ENCODE measurements at regions of chr3 and their contacts with region 1.

Region 1: DNA sequence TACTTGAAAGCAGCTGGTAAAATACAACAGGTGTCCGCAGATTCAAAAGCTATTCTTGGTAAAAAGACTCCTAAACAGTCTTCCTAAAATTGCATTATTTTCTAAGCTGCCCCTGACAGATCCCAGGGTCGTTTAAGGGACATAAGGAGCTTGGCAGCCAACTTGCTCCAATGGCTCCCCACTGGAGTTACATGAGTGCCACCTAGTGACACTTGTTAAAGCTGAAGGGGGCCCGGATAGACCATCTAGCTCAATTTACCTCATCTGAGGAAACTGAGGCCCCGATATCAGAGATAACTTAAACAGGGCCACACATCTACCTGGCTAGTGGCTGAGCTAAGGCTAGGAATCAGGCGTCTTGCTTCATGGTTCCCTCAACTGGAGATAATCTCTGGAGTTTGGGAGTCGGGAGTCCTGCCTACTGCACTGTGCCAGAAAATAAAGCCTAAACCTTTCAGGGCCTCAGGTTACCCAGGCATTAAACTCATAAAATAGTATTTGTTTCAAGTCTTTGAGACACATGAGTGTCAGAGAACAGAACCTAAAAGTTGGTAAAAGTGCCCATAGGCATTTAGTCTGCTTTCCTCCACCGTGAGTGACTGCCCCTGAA is 6.5 kb upstream of the TBC1D23 start:
- DNase-seq: peak in 4 of 9 experiments; percentile 15 to 64 (median 36)
- ATAC-seq: peak; percentile 66
- H3K4me3 ChIP-seq: no peak overlapping the region
- H3K4me3 Mint-ChIP-seq: no peak overlapping the region
- H3K27ac ChIP-seq: no peak overlapping the region
- H3K27ac Mint-ChIP-seq: no peak overlapping the region
- H3K4me1 ChIP-seq: no peaks in the 10 kb centered on the region
- H3K4me1 Mint-ChIP-seq: peaks cover 5% of the 10 kb centered on the region
- H3K27me3 ChIP-seq: no peaks in the 10 kb centered on the region
- H3K27me3 Mint-ChIP-seq: no peaks in the 10 kb centered on the region
- CTCF ChIP-seq: peak; percentile 51

Region 2: GRCh38 chr3:98901392-98902350 is 1352.6 kb before region 1 on chr3 and contains the start of gene DCBLD2:
- CTCF ChIA-PET with region 1: no interaction called
- POLR2A ChIA-PET with region 1: no interaction called
- intact Hi-C with region 1: loop called in 1 of 2 experiments (anchors 10 kb)
- DNase-seq: peak; percentile 75 to 96 (median 87)
- ATAC-seq: peak; percentile 97
- H3K4me3 ChIP-seq: peak within 1 kb of the TSS; percentile 62 to 91
- H3K4me3 Mint-ChIP-seq: peak within 1 kb of the TSS; percentile 94
- H3K27ac ChIP-seq: peak within 1 kb of the TSS; percentile 37 to 46
- H3K27ac Mint-ChIP-seq: peak within 1 kb of the TSS; percentile 73
- H3K4me1 ChIP-seq: peaks cover 15% of the 10 kb centered on the region
- H3K4me1 Mint-ChIP-seq: peaks cover 24% of the 10 kb centered on the region
- H3K27me3 ChIP-seq: no peaks in the 10 kb centered on the region
- H3K27me3 Mint-ChIP-seq: peaks cover 11% of the 10 kb centered on the region
- CTCF ChIP-seq: no peak
- total RNA-seq, gene DCBLD2: 1.6 to 1.8 TPM

Region 3: GRCh38 chr3:99808151-99808794 is 446.0 kb before region 1 on chr3:
- CTCF ChIA-PET with region 1: no interaction called
- POLR2A ChIA-PET with region 1: no interaction called
- intact Hi-C with region 1: loop called in 1 of 2 experiments (anchors 2 kb)
- DNase-seq: peak in 6 of 9 experiments; percentile 10 to 72 (median 44)
- ATAC-seq: peak; percentile 72
- H3K4me3 ChIP-seq: no peak overlapping the region
- H3K4me3 Mint-ChIP-seq: no peak overlapping the region
- H3K27ac ChIP-seq: no peak overlapping the region
- H3K27ac Mint-ChIP-seq: no peak overlapping the region
- H3K4me1 ChIP-seq: no peaks in the 10 kb centered on the region
- H3K4me1 Mint-ChIP-seq: peaks cover 3% of the 10 kb centered on the region
- H3K27me3 ChIP-seq: no peaks in the 10 kb centered on the region
- H3K27me3 Mint-ChIP-seq: no peaks in the 10 kb centered on the region
- CTCF ChIP-seq: peak; percentile 76

Region 4: DNA sequence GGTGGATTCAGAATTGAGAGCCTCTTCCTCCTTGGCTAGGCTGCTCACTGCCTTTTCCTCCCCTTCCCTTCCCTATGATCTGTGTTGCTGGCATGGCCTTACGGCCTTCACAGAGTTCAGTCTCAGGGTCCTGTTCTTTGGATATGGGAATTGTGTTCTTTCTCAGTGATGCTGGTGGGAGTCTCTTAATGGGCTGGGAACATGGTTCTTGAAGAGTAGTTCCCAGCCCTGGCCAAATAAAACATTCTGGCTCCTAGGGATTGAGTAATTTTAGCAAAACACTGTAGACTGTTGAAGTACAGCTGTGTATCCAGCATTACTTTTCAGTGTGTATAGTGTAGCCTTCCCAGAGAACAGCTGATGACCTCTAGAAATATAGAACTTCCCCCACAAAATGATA is 117.4 kb before region 1 on chr3:
- CTCF ChIA-PET with region 1: no interaction called
- POLR2A ChIA-PET with region 1: no interaction called
- intact Hi-C with region 1: no loop called
- DNase-seq: no peak
- ATAC-seq: no peak
- H3K4me3 ChIP-seq: no peak overlapping the region
- H3K4me3 Mint-ChIP-seq: no peak overlapping the region
- H3K27ac ChIP-seq: no peak overlapping the region
- H3K27ac Mint-ChIP-seq: no peak overlapping the region
- H3K4me1 ChIP-seq: no peaks in the 10 kb centered on the region
- H3K4me1 Mint-ChIP-seq: no peaks in the 10 kb centered on the region
- H3K27me3 ChIP-seq: no peaks in the 10 kb centered on the region
- H3K27me3 Mint-ChIP-seq: no peaks in the 10 kb centered on the region
- CTCF ChIP-seq: no peak